ENCODE measurements at regions of chr12 and their contacts with region 1.

Region 1: DNA sequence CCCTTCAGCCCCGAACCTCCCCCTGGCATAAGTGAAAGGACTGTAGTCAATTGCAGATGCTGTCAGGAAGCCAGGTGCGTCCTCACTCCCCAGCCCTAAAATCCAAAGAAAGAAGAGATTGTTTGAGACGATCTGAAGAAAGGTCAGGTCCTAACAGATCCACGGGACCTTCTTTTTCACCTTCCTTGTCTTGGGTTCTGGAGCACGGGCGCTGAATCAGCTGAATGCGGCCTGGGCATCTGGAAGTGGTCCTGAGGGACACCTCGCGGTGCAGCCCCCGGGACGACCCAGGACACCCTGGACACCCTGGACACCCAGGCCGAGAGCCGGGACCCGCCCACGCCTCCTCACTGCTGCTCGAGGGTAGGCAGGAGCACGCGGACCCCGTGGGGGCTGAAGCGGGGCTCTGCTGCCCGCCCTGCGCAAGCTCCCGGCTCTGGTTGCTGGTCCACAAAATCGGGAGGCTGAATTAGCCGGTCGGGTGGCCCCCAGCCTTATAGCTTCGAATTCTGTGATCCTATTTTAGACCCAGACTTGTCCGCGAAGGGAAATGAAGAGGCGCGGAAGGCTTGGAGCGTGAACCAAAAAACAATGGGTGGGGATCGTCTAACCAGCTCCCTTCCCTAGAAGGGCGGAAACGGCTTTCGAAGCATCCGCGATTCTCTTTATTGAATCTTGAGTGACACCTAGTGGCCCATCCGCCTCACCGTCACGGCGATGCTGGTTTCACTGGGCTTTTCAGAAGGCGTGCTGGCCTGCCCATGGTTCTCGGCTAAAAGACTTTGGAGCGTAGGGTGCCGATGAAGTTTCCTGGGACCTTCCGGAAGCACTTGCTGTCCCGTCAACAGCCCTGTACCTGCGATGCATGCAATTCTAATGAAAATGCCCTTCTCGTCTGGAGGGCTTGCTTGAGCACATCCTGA is 46.4 kb upstream of the PLXNC1 start:
- DNase-seq: peak; percentile 91
- H3K4me3 Mint-ChIP-seq: peak overlapping the region; percentile 75
- H3K27ac Mint-ChIP-seq: peak overlapping the region; percentile 35
- H3K4me1 Mint-ChIP-seq: peaks cover 24% of the 10 kb centered on the region
- H3K27me3 Mint-ChIP-seq: no peaks in the 10 kb centered on the region

Region 2: GRCh38 chr12:92987362-92987761 is 1114.6 kb before region 1 on chr12:
- CTCF ChIA-PET with region 1: interaction called, 41 read pairs
- POLR2A ChIA-PET with region 1: no interaction called
- intact Hi-C with region 1: loop called (anchors 1 kb)
- DNase-seq: no peak
- H3K4me3 Mint-ChIP-seq: no peak overlapping the region
- H3K27ac Mint-ChIP-seq: peak overlapping the region; percentile 66
- H3K4me1 Mint-ChIP-seq: peaks cover 33% of the 10 kb centered on the region
- H3K27me3 Mint-ChIP-seq: no peaks in the 10 kb centered on the region

Region 3: DNA sequence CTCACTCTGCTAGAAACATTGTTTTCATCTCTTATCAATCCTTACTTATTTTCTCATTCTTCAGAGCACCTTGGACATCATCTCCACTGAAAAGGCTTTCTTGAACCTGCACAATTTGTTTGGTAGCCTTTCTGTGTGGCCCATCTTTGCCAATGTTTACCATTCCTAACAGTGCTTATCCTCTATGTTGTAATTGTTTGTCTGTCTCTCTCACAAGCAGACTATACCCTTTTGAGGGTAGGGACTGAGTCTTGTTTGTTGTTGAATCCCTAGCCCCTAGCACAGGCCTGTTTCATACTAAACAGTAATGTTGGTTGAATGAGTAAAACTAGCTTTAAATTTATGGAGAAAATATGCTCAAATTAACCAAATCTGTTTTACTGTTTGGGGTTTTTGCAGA is 625.4 kb before region 1 on chr12:
- CTCF ChIA-PET with region 1: interaction called, 12 read pairs
- POLR2A ChIA-PET with region 1: no interaction called
- intact Hi-C with region 1: no loop called
- DNase-seq: no peak
- H3K4me3 Mint-ChIP-seq: no peak overlapping the region
- H3K27ac Mint-ChIP-seq: no peak overlapping the region
- H3K4me1 Mint-ChIP-seq: peaks cover 3% of the 10 kb centered on the region
- H3K27me3 Mint-ChIP-seq: no peaks in the 10 kb centered on the region

Region 4: DNA sequence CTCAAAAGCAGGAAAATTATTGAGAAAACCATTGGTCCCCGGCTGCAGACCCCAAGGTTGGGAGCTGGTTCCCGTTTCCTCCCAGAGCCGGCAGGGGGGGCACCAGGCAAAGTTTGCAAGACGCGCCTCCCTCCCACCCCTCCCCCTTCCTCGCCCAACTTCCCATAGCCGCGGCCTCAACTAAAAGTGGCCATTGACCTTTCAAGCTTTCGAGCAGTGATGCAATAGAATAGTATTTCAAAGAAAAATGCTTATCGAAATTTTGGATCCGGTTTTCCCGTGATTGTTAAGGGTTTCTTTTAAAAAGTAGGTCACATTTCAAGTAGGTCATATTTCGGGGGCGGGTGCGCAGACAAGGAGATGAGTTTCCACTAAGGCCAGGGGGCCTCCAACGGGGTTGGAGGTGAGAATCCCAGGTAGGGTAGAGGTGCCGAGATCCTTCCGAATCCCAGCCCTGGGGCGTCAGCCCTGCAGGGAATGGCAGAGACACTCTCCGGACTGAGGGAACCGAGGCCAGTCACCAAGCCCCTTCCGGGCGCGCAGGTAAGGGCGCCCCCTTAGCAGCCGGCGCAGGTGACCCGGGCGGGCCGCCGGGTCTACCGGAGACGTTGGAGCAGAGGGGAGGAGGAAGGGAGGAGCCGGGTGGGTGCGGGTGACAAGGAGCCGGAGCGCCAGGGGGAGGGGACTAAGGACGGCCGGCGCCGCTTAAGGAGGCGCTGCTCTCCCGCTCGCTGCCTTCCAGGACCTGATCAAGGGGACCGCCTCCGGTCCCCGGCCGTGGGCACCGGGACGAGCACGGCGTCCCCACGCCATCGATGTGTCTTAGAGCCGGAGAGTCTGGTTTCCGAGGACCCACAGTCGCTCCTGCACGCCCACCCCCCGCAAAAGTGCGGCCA is 532.1 kb before region 1 on chr12:
- CTCF ChIA-PET with region 1: interaction called, 190 read pairs
- POLR2A ChIA-PET with region 1: interaction called, 16 read pairs
- intact Hi-C with region 1: loop called (anchors 1 kb)
- DNase-seq: peak; percentile 86
- H3K4me3 Mint-ChIP-seq: peak overlapping the region; percentile 83
- H3K27ac Mint-ChIP-seq: peak overlapping the region; percentile 84
- H3K4me1 Mint-ChIP-seq: peaks cover 24% of the 10 kb centered on the region
- H3K27me3 Mint-ChIP-seq: peaks cover 14% of the 10 kb centered on the region

Region 5: GRCh38 chr12:93773122-93773871 is 328.7 kb before region 1 on chr12:
- CTCF ChIA-PET with region 1: interaction called, 211 read pairs
- POLR2A ChIA-PET with region 1: interaction called, 8 read pairs
- intact Hi-C with region 1: no loop called
- DNase-seq: peak; percentile 77
- H3K4me3 Mint-ChIP-seq: peak overlapping the region; percentile 45
- H3K27ac Mint-ChIP-seq: peak overlapping the region; percentile 35
- H3K4me1 Mint-ChIP-seq: peaks cover 39% of the 10 kb centered on the region
- H3K27me3 Mint-ChIP-seq: no peaks in the 10 kb centered on the region

Region 6: GRCh38 chr12:93979189-93979588 is 122.8 kb before region 1 on chr12:
- CTCF ChIA-PET with region 1: interaction called, 66 read pairs
- POLR2A ChIA-PET with region 1: interaction called, 3 read pairs
- intact Hi-C with region 1: loop called (anchors 1 kb)
- DNase-seq: peak; percentile 26
- H3K4me3 Mint-ChIP-seq: no peak overlapping the region
- H3K27ac Mint-ChIP-seq: no peak overlapping the region
- H3K4me1 Mint-ChIP-seq: peaks cover 6% of the 10 kb centered on the region
- H3K27me3 Mint-ChIP-seq: no peaks in the 10 kb centered on the region

Region 7: DNA sequence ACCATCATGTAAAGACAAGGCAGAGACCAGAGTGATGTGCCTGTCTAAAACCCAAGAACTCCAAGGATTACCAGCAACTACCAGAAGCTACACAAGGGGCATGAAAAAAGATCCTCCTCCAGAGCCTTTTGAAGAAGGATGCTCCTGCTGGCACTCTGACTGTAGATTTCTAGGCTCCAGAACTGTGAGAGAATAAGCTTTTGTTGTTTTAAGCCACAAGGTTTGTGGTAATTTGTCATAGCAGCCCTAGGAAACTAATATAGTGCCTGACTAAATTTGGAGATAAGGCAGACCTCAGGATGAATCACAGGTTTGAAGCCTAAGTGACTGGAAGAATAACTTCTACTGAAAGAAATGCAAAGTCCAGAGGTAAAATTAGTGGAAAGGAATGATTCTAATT is 224.7 kb after region 1 on chr12:
- CTCF ChIA-PET with region 1: no interaction called
- POLR2A ChIA-PET with region 1: no interaction called
- intact Hi-C with region 1: no loop called
- DNase-seq: peak; percentile 20
- H3K4me3 Mint-ChIP-seq: no peak overlapping the region
- H3K27ac Mint-ChIP-seq: peak overlapping the region; percentile 8
- H3K4me1 Mint-ChIP-seq: peaks cover 24% of the 10 kb centered on the region
- H3K27me3 Mint-ChIP-seq: no peaks in the 10 kb centered on the region

Region 8: GRCh38 chr12:94435511-94435927 is 333.5 kb after region 1 on chr12:
- CTCF ChIA-PET with region 1: no interaction called
- POLR2A ChIA-PET with region 1: no interaction called
- intact Hi-C with region 1: no loop called
- DNase-seq: no peak
- H3K4me3 Mint-ChIP-seq: no peak overlapping the region
- H3K27ac Mint-ChIP-seq: no peak overlapping the region
- H3K4me1 Mint-ChIP-seq: peaks cover 15% of the 10 kb centered on the region
- H3K27me3 Mint-ChIP-seq: no peaks in the 10 kb centered on the region

Region 9: DNA sequence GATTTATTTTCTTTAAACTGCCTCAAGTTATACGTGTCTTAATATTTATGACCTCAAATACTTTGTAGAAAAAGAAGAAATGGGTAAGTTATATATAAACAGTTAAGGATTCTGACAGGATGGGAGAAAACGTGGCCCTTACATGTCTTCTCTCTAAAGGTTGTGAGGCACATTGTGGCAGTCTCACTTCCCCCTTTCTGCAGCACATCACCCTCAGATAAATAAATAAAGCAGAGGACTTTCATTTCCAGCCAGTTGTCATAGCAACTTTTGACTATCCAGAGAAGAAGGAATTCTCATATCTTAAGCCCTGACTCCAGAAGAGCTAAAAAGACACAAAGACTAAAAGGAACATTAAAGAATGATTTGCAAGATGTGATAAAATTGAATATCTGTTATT is 386.5 kb after region 1 on chr12:
- CTCF ChIA-PET with region 1: no interaction called
- POLR2A ChIA-PET with region 1: no interaction called
- intact Hi-C with region 1: no loop called
- DNase-seq: no peak
- H3K4me3 Mint-ChIP-seq: no peak overlapping the region
- H3K27ac Mint-ChIP-seq: no peak overlapping the region
- H3K4me1 Mint-ChIP-seq: no peaks in the 10 kb centered on the region
- H3K27me3 Mint-ChIP-seq: no peaks in the 10 kb centered on the region

Region 10: GRCh38 chr12:94889445-94890210 is 787.6 kb after region 1 on chr12:
- CTCF ChIA-PET with region 1: no interaction called
- POLR2A ChIA-PET with region 1: no interaction called
- intact Hi-C with region 1: no loop called
- DNase-seq: no peak
- H3K4me3 Mint-ChIP-seq: no peak overlapping the region
- H3K27ac Mint-ChIP-seq: no peak overlapping the region
- H3K4me1 Mint-ChIP-seq: no peaks in the 10 kb centered on the region
- H3K27me3 Mint-ChIP-seq: no peaks in the 10 kb centered on the region

Measured in activated CD4-positive, alpha-beta memory T cell treated with anti-CD3 and anti-CD28 coated beads for 36 hours (primary cell).